ENCODE measurements at regions of chr19 and their contacts with region 1.

Region 1: DNA sequence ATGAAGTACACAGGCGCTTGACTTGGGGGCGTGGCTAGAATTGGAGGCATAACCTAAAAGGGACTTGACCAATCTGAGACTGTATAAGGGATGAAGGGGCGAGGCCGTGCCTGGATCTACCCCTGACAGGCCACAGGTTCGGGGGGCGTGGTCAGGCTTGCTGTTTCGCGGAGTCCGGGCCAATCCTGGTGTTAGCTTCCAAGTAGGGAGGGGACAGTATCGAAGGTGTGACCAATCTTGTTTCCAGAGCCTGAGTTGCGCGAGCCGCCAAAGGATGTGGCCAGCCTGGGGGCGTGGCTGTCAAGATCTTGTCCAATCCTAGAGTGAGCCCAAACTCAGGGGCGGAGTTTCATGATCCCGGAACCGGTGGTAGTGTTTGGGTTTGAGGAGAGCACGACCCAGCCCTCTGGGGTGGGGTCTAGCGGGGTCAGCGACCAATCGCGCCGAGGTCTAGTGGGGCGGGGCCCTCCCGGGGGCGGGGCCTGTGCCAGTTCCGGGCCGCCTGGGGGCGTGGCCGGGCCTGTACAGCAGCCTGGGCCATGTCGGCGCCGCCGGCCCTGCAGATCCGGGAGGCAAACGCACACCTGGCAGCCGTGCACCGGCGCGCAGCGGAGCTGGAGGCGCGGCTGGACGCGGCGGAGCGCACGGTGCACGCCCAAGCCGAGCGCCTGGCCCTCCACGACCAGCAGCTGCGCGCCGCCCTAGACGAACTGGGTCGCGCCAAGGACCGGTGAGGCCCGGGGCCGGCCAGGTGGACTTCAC is at the start of gene VMAC:
- DNase-seq: peak; percentile 100
- H3K4me3 ChIP-seq: peak within 1 kb of the TSS; percentile 98 to 99
- H3K27ac ChIP-seq: peak within 1 kb of the TSS; percentile 63 to 93
- H3K4me1 ChIP-seq: peaks cover 5 to 25% of the 10 kb centered on the region in 2 donors
- H3K27me3 ChIP-seq: no peaks in the 10 kb centered on the region
- CTCF ChIP-seq: no peak
- total RNA-seq, gene VMAC: 15.2 TPM

Region 2: GRCh38 chr19:5680437-5681368 is 223.8 kb before region 1 on chr19 and contains the starts of genes HSD11B1L and MICOS13:
- intact Hi-C with region 1: loop called (anchors 2 kb)
- DNase-seq: peak; percentile 97 to 99
- H3K4me3 ChIP-seq: peak within 1 kb of the TSS; percentile 77 to 96
- H3K27ac ChIP-seq: peak within 1 kb of the TSS; percentile 80 to 95
- H3K4me1 ChIP-seq: peaks cover 6 to 9% of the 10 kb centered on the region in 2 donors
- H3K27me3 ChIP-seq: no peaks in the 10 kb centered on the region
- CTCF ChIP-seq: no peak
- total RNA-seq, gene HSD11B1L: 116 TPM
- total RNA-seq, gene MICOS13: 75.6 TPM

Region 3: GRCh38 chr19:5803752-5804515 is 100.6 kb before region 1 on chr19:
- intact Hi-C with region 1: loop called (anchors 1 kb)
- DNase-seq: peak; percentile 25 to 84
- H3K4me3 ChIP-seq: peak overlapping the region; percentile 25 to 49
- H3K27ac ChIP-seq: no peak overlapping the region
- H3K4me1 ChIP-seq: peaks cover 3% of the 10 kb centered on the region in 2 donors
- H3K27me3 ChIP-seq: peaks cover 16% of the 10 kb centered on the region
- CTCF ChIP-seq: peak; percentile 71 to 84 (median 79)

Region 4: GRCh38 chr19:5977785-5978605 is 73.5 kb after region 1 on chr19 and contains the start of gene RANBP3:
- intact Hi-C with region 1: loop called (anchors 2 kb)
- DNase-seq: peak; percentile 95 to 99
- H3K4me3 ChIP-seq: peak within 1 kb of the TSS; percentile 84 to 97
- H3K27ac ChIP-seq: peak within 1 kb of the TSS; percentile 87 to 96
- H3K4me1 ChIP-seq: peaks cover 18 to 35% of the 10 kb centered on the region in 2 donors
- H3K27me3 ChIP-seq: no peaks in the 10 kb centered on the region
- CTCF ChIP-seq: no peak
- total RNA-seq, gene RANBP3: 48.0 TPM

Region 5: DNA sequence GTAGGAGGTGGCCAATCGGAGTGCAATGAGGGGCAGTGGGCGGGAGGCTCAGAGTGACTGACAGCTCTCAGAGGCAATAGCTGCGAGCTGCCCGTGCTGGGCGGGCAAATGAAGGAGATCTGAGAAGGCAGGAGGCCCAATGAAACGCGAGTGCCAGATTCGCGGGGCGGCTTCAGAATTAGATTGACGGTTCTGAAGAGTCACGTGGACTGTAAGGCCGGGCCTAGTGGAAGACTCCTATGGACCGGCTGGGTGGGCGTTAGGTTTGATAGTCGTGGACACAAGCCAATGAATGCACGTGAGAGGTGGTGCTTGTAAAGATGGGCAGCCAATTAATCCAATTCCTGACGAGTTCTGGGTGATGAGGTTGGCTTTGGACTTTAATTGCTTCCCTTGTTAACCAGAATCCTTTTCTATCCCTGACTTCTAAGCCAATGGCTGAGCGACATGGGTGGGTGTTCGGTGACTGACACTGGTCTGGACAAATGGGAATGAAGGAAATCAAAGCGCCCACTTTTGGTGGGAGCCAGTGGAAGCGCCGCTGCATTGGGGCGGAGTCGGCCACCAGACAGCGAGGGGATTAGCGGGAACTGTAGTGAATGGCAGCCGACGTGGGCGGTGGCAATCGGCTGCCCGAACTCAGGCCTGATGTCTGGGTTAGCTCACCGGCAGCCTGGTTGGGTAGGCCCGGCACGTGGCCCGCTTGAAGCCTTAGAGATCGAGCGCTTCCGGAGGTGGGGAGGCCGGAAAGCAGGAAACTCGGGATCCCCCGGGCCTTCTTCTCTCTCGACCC is 520.6 kb after region 1 on chr19:
- intact Hi-C with region 1: loop called (anchors 10 kb)
- DNase-seq: peak; percentile 100
- H3K4me3 ChIP-seq: peak overlapping the region; percentile 21 to 48
- H3K27ac ChIP-seq: peak overlapping the region; percentile 83 to 87
- H3K4me1 ChIP-seq: peaks cover 13 to 21% of the 10 kb centered on the region in 2 donors
- H3K27me3 ChIP-seq: no peaks in the 10 kb centered on the region
- CTCF ChIP-seq: peak in 1 of 3 experiments; percentile 17

Measured in ascending aorta (tissue), 2 donors.